ENCODE measurements at regions of chr1 and their contacts with region 1.

Region 1: DNA sequence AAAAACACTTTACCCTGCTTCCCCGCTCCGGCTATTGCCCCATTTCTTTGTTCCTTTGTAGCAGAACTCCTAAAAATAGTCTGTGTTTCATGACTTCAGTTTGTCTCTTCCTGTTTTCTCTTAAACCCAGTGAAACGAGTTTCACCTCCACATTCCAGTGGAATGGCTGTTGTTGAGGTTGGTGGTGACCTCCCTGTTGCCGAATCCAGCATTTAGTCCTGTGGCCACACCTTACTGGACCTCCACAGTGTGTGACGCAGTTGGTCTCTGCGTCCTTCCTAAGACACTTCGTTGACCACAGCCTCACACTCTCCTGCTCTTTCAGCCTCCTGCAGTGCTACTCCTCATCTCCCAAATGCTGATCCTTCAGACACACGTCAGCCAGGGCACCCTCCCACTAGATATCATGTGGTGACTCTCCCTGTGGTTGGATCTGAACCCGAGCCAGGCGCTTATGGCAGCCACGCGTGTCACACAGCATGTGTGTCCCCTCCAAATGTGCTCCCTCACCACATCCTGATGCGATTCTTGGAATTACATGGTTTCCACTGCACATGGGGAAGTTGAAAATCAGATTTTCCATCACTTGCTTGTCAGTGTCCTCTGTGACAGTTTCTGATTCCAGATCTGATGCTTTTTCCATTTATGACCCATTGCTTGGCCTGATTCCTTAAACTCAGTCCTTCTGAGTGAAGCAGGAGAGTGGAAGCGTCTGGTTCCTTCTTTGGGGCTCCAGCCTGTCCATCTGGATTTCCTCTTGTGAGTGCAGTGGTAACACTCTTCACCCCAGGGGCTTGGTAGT is 99.1 kb upstream of the ARTN start:
- H3K4me3 Mint-ChIP-seq: peak overlapping the region; percentile 68
- H3K27ac Mint-ChIP-seq: peak overlapping the region; percentile 88
- H3K4me1 Mint-ChIP-seq: peaks cover 80% of the 10 kb centered on the region
- H3K27me3 Mint-ChIP-seq: no peaks in the 10 kb centered on the region

Region 2: DNA sequence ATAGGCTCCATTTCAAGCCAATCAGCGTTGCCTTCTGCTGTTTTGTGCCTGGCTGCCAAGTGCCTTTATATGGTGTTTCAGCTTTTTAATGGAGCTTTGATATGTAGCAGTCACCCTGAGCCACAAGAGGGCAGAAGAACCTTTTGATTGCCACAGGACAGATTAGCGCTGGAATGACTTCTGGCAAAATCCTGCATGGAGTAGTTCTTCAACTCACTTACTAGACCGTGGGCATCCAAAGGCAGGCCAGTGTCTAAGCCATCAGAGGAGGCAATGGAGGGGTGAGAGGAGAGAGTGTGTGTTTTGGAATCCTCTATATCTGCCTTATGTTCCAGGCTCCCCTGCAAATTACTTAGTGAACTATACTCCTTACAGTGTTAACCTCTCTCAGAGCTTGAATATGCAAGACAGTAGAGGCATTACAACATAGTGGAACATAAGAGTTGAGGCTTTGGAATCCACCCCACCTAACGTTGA is 70.9 kb before region 1 on chr1:
- intact Hi-C with region 1: no loop called
- H3K4me3 Mint-ChIP-seq: no peak overlapping the region
- H3K27ac Mint-ChIP-seq: no peak overlapping the region
- H3K4me1 Mint-ChIP-seq: peaks cover 12% of the 10 kb centered on the region
- H3K27me3 Mint-ChIP-seq: no peaks in the 10 kb centered on the region

Region 3: GRCh38 chr1:43774359-43774758 is 60.1 kb before region 1 on chr1:
- intact Hi-C with region 1: loop called (anchors 5 kb)
- H3K4me3 Mint-ChIP-seq: no peak overlapping the region
- H3K27ac Mint-ChIP-seq: no peak overlapping the region
- H3K4me1 Mint-ChIP-seq: peaks cover 42% of the 10 kb centered on the region
- H3K27me3 Mint-ChIP-seq: no peaks in the 10 kb centered on the region

Measured in dendritic cell treated with granulocyte-macrophage colony-stimulating factor and Interleukin-4, amounts not matched to agents 40 ng/mL and 50 ng/mL, for 4 days (primary cell).